Ascending aorta (tissue), 2 donors: ENCODE measurements at regions of chr7 and their contacts with region 1.

Region 1: GRCh38 chr7:23105644-23106056 is at the start of gene KLHL7:
- DNase-seq: peak; percentile 87 to 99
- H3K4me3 ChIP-seq: peak within 1 kb of the TSS; percentile 88 to 96
- H3K27ac ChIP-seq: peak within 1 kb of the TSS; percentile 89 to 92
- H3K4me1 ChIP-seq: peaks cover 4 to 26% of the 10 kb centered on the region in 2 donors
- H3K27me3 ChIP-seq: no peaks in the 10 kb centered on the region
- CTCF ChIP-seq: no peak
- total RNA-seq, gene KLHL7: 1.2 TPM

Region 2: DNA sequence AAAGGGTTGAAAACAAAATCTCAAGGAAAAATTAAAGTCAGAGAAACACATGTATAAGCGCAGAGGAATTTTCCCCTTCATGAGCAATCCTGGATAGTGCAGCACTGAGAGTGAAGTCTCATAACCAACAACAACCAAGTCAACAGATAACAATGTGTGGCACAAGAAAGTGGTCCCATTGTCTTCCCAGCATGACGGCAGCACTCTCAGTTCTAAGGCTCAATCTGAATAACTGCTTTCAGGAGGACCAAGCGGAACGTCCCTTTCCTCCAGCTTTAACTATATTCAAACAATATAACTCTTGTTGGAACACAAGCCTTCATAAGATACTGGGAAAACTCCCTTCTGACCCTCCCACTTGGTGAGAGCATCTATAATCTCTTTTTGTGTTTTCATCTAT is 886.6 kb before region 1 on chr7:
- intact Hi-C with region 1: loop called (anchors 10 kb)
- DNase-seq: no peak
- H3K4me3 ChIP-seq: peak overlapping the region; percentile 48 to 58
- H3K27ac ChIP-seq: peak overlapping the region; percentile 74 to 86
- H3K4me1 ChIP-seq: peaks cover 16 to 28% of the 10 kb centered on the region in 2 donors
- H3K27me3 ChIP-seq: no peaks in the 10 kb centered on the region
- CTCF ChIP-seq: no peak

Region 3: DNA sequence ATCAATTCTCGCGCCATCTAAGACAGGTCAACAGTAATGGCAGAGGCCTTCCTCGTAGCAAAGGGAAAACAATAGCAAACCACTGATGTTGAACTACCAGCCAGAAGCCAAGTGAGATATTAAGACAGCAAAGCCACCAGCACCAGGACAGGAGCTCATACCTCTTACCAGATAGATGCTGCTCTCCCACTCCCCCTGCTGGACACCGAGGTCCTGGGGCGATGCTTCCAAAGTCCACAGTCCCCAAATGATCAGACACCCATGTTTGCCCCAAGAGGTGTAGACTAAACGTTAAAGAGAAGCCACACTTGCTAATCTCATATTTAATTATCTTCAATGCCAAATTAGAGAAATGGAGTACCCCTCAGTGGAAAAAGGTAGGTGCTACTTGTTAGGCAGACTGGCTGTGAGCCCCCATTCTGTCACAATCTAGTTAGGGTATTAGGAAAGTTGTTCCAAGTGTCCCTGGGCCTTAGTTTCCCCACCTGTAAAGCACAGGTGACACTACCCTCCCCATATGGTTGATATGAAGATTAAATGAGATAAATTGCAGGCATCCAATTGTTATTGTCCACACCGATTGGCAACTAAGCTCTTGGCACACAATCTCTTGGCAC is 322.9 kb before region 1 on chr7:
- intact Hi-C with region 1: no loop called
- DNase-seq: peak in 1 of 2 donors; percentile 74
- H3K4me3 ChIP-seq: no peak overlapping the region
- H3K27ac ChIP-seq: no peak overlapping the region
- H3K4me1 ChIP-seq: no peaks in the 10 kb centered on the region
- H3K27me3 ChIP-seq: no peaks in the 10 kb centered on the region
- CTCF ChIP-seq: peak; percentile 41 to 66 (median 55)

Region 4: DNA sequence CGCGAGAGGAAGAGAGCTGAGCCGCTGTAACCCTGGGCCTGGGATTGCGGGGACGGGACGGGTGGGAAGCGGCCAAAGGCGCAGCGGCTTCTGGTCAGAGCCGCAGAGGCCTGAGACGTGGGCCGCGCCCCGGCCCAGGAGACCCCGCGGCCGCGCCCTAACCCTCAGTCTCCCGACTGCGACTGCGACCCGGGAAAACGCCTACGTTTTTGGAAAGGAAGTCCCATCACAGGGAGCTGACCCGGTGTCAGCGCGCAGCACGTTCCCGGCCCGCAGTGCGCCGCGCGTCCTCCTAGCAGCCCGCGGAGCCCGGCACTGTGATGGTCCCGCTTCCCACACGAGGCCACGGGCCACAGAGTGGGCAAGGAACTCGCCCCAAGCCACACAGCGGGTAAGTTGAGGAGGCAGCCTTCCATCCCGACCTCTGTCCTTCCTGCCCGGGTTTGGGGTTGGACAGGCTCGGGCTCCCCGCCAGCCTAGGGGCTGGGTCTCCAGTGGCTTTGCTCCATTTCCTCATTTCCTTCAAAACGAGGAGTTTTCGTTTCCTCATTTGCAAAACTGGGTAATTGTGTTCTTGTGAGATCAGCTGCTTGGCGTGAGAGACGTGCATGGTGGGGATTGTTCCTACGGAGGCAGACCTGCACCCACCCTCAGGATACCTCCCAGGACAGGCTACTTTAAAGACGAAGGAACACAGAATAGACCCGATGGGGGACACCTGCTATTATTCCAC is 142.1 kb after region 1 on chr7:
- intact Hi-C with region 1: loop called (anchors 5 kb)
- DNase-seq: peak in 1 of 2 donors; percentile 66
- H3K4me3 ChIP-seq: peak overlapping the region; percentile 47 to 73
- H3K27ac ChIP-seq: peak overlapping the region; percentile 90 to 91
- H3K4me1 ChIP-seq: peaks cover 0 to 18% of the 10 kb centered on the region in 2 donors
- H3K27me3 ChIP-seq: no peaks in the 10 kb centered on the region
- CTCF ChIP-seq: no peak